Cardiac septum (tissue), 1 donor: ENCODE measurements at regions of chr19 and their contacts with region 1.

Region 1: DNA sequence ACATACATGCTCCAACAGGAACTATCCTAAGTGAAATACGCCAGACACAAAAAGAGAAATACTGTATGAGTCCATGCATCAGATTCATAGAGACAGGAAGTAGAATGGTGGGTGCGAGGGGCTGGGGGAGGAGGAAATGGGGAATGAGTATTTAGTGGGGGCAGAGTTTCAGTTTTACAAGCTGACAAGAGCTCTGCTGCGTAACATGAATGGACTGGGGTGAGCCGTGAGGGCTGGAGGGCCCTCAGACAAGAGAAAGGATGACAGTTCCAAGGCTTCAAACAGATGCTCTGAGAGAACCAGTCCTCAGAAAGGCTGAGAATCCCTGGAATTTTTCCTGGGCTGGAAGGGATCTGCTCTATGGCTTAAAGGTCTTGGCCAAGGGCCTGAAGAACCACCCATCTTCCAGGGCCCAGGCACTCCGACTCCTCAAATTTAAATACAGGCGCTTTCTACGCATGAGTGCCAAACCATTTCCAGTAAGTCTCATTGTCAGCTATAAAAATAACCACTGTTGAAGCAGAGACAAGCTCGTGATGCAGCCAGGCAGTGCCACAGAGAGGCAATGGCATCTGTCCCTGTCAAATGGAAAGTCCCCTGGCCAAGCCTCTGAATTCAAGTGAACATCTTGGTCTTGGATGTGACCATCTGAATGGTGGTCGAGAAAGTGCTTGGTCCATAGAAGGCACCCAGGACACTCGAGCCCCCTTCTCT is 17.5 kb downstream of the KLF2 start:
- DNase-seq: peak; percentile 83

Region 2: DNA sequence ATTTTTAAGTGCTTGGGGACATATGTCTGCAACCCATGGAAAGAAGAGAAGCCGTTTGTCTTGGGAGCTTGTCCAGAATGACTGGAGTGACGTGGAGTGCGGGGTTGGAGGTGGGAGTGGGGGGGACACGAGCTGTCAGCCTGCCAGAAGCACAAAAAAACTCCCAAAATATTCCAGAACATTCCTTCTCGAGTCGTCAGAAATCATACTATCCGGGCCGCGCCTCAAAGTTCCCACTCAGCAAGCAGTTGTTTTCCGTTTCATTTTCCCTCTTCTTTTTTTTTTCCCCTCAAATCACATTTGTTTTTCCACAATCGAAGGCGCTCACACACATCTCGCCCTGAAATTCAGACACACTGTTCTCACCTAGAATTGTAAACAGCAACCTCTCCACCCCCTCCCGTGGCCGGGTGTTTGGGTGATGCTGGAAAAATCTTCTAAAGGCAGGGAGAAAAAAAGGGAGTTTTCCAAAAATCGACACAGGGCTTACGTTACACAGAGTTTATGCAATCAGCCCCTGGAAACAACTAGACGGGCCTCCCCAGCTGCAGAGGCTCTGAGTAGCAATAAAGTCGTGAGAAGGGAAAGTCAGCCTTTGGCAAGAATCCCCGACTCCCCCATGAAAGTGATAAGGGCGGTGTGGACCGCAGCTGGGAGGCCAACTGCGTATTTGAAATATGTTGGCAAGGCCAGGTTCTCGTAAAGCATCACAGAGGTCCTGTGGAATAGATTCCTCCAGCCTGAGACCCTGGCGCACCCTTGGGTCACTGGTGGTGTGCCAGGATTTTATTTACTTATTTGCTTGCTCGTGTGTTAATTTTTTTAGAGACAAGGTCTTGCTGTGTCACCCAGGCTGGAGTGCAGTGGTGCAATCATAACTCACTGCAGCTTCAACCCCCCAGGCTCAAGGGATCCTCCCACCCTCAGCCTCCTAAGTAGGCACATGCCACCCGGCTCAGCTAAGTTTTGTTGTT is 48.8 kb before region 1 on chr19:
- intact Hi-C with region 1: no loop called
- DNase-seq: peak; percentile 77

Region 3: DNA sequence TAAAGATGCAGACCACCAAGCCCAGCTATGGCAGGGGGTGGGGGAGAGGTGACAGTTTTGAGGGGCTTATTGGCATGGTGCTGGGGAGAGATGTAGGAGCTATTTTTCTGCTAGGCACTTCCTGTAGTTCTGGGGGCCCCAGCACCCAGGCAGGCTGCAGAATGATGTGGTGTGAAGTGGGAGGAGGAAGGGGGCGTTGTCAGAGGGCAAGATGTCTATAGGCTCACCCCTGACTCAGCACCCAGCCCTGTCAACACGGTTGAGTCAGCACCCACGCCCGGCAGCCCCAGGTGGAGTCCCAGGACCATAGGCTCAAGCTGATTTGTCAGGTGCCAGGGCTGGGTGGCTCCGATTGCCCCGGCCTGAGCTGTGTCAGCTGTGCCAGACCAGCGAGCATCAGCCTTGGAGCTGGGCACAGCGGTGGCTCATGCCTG is 11.8 kb before region 1 on chr19:
- intact Hi-C with region 1: loop called (anchors 1 kb)
- DNase-seq: peak; percentile 93

Region 4: DNA sequence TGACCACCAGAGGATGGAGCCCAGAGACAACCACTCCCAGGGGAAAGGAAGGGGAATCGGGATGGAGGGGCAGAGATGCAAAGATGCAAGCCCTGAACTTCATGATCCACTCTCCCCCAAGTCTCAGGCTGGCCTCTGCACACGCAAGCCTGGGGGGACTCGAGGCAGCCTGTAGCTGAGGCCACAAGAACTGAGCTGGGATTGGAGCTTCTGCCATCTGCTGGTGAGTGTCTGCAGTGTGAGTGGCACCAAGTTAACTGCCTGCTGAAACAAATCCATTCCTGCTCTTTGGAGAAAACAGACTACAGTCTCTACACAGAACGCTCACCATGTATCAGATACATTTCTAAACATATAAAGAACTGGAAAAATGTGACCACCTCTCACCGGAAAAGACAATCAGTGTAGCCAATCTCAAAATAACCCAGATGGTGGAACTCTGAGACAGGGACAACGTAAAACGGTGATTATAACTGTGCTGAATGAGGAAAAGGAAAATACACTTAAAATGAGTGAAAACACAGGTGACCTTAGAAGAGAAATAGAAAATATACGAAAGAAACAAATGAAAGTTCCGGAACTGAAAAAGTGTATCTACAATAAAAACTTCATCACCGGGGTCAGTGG is 44.6 kb after region 1 on chr19:
- intact Hi-C with region 1: no loop called
- DNase-seq: peak; percentile 81